Naive thymus-derived CD8-positive, alpha-beta T cell (primary cell): ENCODE measurements at regions of chr22 and their contacts with region 1.

Region 1: DNA sequence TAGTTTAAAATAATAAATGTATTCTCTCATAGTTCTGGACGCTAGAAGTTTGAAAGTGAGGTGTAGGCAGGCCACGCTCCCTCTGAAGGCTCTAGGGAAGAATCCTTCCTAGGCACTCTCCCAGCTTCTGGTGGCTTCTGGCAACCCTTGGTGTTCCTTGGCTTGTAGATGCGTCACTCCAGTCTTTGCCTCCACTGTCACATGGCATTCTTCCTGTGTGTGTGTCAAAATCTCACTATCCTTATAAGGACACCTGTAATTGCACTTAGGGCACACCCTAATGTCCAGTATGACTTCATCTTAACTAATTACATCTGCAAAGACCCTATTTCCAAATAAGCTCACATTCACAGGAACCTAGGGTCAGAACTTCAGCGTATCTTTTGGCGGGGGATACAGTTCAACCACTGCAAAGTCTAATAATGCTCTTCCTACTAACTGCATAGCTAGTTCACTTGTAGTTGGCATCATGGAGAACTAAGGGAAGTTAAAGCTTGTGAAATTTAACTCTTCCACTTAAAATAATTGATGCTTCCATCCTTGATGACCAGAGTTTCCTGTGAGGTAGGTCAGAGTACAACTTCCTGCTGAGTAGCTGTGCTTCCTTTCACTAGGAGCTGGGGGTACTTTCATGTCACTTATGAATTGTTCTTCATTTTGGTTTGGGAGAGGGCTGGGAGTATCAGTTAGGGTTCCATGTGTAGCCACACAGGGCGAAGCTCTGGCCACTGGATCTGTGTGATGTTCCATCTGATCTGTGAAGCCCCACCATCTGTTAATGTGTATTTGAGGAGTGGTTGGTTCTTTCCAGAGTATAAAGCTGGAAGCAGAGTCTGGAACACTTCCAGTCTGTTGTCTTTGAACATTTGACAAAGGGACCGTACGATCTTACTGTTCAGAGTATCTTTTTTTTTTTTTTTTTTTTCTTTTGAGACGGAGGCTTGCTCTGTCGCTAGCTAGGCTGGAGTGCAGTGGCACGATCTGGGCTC is 10.5 kb downstream of the YWHAH start:
- DNase-seq: no peak
- ATAC-seq: peak in 1 of 2 donors; percentile 28
- H3K4me3 Mint-ChIP-seq: peak overlapping the region in 6 of 10 donors; percentile 11 to 63 (median 44)
- H3K27ac Mint-ChIP-seq: peak overlapping the region; percentile 7 to 87 (median 76)
- H3K4me1 Mint-ChIP-seq: peaks cover 40 to 76% (median 72%) of the 10 kb centered on the region in 4 donors
- H3K27me3 Mint-ChIP-seq: no peaks in the 10 kb centered on the region

Region 2: DNA sequence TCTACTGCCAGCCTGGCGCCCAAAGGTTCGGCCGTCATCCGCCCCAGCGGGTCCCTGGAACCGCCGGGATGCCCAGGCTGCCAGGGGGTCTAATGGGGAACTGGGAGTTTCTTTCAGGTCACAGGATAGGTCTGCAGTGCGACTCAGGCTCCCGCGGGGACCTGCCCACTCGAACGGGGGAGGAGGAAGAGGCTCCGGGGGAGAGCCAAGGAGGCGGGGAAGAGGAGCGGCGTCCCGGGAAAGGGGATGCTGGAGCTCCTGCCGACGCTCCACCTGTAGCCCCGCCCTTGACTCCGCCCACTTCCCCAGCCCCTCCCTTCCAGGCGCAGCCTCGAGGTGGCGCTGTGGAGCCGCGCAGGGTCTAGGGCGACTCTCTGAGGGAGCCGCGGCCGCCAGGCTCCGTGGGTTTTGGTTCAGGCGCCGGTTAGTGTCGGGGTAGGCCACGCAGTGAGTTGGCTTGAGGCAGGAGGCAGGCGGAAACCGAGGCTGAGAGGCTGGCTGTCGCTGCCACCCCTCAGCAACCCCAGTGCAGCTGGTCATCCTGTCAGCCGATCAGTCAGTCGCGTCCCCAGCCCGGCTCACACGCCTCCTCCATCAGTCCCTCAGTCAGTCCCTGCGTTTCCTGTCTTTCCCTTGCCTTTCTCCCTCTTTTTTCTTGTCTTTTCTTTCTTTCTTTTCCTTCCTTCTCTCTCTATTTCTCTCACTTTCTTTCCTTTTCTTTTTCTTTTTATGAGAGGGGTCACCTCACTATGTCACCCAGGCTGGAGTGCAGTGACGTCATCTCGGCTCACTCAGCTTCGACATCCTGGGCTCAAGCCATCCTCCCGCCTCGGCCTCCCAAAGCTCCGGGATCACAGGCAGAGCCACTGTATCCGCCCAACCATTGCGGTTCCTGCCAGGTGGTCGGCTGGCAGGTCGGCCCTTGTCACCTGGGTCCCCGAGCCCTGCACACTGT is 15.9 kb after region 1 on chr22:
- POLR2A ChIA-PET with region 1: interaction called, 10 read pairs
- DNase-seq: peak; percentile 72 to 97 (median 88)
- ATAC-seq: peak; percentile 93 to 94
- H3K4me3 Mint-ChIP-seq: peak overlapping the region; percentile 77 to 87 (median 83)
- H3K27ac Mint-ChIP-seq: peak overlapping the region in 9 of 10 donors; percentile 37 to 87 (median 63)
- H3K4me1 Mint-ChIP-seq: peaks cover 8 to 15% (median 10%) of the 10 kb centered on the region in 4 donors
- H3K27me3 Mint-ChIP-seq: peaks cover 0 to 2% (median 0%) of the 10 kb centered on the region in 5 donors